ENCODE measurements at regions of chr6 and their contacts with region 1.

Region 1: GRCh38 chr6:122471107-122472021 is at the start of gene SERINC1:
- H3K4me3 Mint-ChIP-seq: peak within 1 kb of the TSS; percentile 89
- H3K27ac Mint-ChIP-seq: peak within 1 kb of the TSS; percentile 96
- H3K4me1 Mint-ChIP-seq: peaks cover 31% of the 10 kb centered on the region
- H3K27me3 Mint-ChIP-seq: no peaks in the 10 kb centered on the region

Region 2: DNA sequence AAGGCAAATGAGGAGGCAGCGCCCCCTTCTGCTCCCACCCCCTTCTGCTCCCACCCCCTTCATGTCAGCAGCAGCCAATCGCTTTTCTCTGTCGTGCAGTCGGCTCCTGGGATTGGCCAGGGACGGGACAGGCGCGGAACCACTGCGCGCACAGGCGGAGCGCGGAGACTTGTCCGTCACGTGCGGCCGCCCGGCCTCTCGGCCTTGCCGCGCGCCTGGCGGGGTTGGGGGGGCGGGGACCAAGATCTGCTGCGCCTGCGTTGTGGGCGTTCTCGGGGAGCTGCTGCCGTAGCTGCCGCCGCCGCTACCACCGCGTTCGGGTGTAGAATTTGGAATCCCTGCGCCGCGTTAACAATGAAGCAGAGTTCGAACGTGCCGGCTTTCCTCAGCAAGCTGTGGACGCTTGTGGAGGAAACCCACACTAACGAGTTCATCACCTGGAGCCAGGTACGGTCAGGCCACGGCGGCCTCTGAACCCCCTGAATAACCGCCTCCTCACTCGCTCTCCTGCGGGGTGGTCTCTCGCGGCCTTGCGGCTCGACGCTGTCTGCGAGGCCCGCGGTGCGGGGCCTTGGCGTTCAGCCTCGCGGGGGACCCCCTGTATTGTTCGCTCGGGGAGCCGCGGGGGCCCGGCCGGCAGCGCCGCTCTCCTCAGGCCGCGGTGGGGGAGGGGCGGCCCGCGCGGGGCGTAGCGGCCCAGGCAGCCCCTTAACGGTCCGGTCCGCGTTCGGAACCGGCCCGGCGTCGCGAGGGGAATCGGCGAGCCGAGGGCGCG is 71.8 kb before region 1 on chr6 and contains the start of gene HSF2:
- intact Hi-C with region 1: loop called (anchors 1 kb)
- H3K4me3 Mint-ChIP-seq: peak within 1 kb of the TSS; percentile 97
- H3K27ac Mint-ChIP-seq: peak within 1 kb of the TSS; percentile 88
- H3K4me1 Mint-ChIP-seq: peaks cover 13% of the 10 kb centered on the region
- H3K27me3 Mint-ChIP-seq: no peaks in the 10 kb centered on the region

Region 3: GRCh38 chr6:122530440-122531046 is 59.2 kb after region 1 on chr6:
- intact Hi-C with region 1: loop called (anchors 1 kb)
- H3K4me3 Mint-ChIP-seq: no peak overlapping the region
- H3K27ac Mint-ChIP-seq: no peak overlapping the region
- H3K4me1 Mint-ChIP-seq: no peaks in the 10 kb centered on the region
- H3K27me3 Mint-ChIP-seq: peaks cover 1% of the 10 kb centered on the region

Region 4: GRCh38 chr6:122553697-122554096 is 82.3 kb after region 1 on chr6:
- intact Hi-C with region 1: no loop called
- H3K4me3 Mint-ChIP-seq: no peak overlapping the region
- H3K27ac Mint-ChIP-seq: no peak overlapping the region
- H3K4me1 Mint-ChIP-seq: no peaks in the 10 kb centered on the region
- H3K27me3 Mint-ChIP-seq: peaks cover 3% of the 10 kb centered on the region

Region 5: GRCh38 chr6:122717350-122717749 is 246.0 kb after region 1 on chr6:
- intact Hi-C with region 1: loop called (anchors 2 kb)
- H3K4me3 Mint-ChIP-seq: no peak overlapping the region
- H3K27ac Mint-ChIP-seq: peak overlapping the region; percentile 57
- H3K4me1 Mint-ChIP-seq: peaks cover 40% of the 10 kb centered on the region
- H3K27me3 Mint-ChIP-seq: no peaks in the 10 kb centered on the region

Region 6: DNA sequence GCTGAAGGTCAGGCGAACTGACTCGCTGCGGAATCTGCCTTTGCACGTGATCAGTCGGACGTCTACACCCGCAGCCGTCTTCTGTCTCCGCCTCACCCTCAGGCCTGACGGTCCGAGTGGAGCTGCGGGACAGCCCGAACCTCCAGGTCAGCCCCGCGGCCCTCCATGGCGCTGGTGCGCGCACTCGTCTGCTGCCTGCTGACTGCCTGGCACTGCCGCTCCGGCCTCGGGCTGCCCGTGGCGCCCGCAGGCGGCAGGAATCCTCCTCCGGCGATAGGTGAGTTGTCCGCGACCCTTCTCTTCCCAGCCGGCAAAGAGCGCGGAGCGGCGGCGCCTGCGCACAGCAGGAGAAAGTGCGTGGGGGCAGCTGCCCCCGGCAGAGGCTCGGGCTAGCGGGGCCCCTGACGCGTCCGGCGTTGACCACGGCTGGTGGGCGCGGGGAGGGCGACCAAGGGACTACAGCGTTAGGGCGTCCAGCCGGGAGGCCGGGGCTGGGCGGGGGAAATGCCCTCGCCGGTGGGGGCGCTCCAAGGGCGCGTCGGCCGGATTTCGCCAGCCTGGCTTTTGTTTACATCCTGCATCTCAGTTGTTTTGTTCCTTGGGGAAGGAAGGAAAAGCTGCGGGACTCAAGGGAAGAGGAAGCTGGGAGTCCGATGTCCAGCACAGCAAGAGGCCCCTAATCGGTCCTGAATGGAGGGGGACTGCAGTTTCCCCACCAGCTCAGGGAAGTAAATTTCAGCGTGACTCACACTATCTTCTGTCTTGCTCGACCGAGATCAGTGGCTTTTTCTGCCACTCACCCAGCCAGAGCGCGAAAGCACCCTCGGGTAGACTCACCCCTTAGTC is 318.0 kb after region 1 on chr6 and contains the start of gene SMPDL3A:
- intact Hi-C with region 1: loop called (anchors 5 kb)
- H3K4me3 Mint-ChIP-seq: peak within 1 kb of the TSS; percentile 79
- H3K27ac Mint-ChIP-seq: peak within 1 kb of the TSS; percentile 86
- H3K4me1 Mint-ChIP-seq: peaks cover 34% of the 10 kb centered on the region
- H3K27me3 Mint-ChIP-seq: peaks cover 11% of the 10 kb centered on the region

Region 7: GRCh38 chr6:123965894-123966293 is 1494.5 kb after region 1 on chr6:
- intact Hi-C with region 1: no loop called
- H3K4me3 Mint-ChIP-seq: no peak overlapping the region
- H3K27ac Mint-ChIP-seq: no peak overlapping the region
- H3K4me1 Mint-ChIP-seq: no peaks in the 10 kb centered on the region
- H3K27me3 Mint-ChIP-seq: no peaks in the 10 kb centered on the region

Measured in dendritic cell treated with granulocyte-macrophage colony-stimulating factor and Interleukin-4, amounts not matched to agents 40 ng/mL and 50 ng/mL, for 4 days (primary cell).